Psoas muscle (tissue), 8 donors: ENCODE measurements at regions of chr5 and their contacts with region 1.

Region 1: GRCh38 chr5:157142317-157143126 is at the start of gene MED7:
- DNase-seq: peak; percentile 88 to 94
- ATAC-seq: peak; percentile 98 to 99 (median 99)
- H3K4me3 ChIP-seq: peak within 1 kb of the TSS; percentile 99
- H3K27ac ChIP-seq: peak within 1 kb of the TSS; percentile 97
- H3K4me1 ChIP-seq: peaks cover 8% of the 10 kb centered on the region
- H3K27me3 ChIP-seq: no peaks in the 10 kb centered on the region
- CTCF ChIP-seq: no peak
- total RNA-seq, gene MED7: 10.6 to 11.8 (median 11.3) TPM

Region 2: GRCh38 chr5:157290981-157291711 is 148.6 kb after region 1 on chr5:
- intact Hi-C with region 1: no loop called
- DNase-seq: no peak
- ATAC-seq: peak in 2 of 4 donors; percentile 59 to 66
- H3K4me3 ChIP-seq: no peak overlapping the region
- H3K27ac ChIP-seq: no peak overlapping the region
- H3K4me1 ChIP-seq: peaks cover 8% of the 10 kb centered on the region
- H3K27me3 ChIP-seq: no peaks in the 10 kb centered on the region
- CTCF ChIP-seq: no peak

Region 3: DNA sequence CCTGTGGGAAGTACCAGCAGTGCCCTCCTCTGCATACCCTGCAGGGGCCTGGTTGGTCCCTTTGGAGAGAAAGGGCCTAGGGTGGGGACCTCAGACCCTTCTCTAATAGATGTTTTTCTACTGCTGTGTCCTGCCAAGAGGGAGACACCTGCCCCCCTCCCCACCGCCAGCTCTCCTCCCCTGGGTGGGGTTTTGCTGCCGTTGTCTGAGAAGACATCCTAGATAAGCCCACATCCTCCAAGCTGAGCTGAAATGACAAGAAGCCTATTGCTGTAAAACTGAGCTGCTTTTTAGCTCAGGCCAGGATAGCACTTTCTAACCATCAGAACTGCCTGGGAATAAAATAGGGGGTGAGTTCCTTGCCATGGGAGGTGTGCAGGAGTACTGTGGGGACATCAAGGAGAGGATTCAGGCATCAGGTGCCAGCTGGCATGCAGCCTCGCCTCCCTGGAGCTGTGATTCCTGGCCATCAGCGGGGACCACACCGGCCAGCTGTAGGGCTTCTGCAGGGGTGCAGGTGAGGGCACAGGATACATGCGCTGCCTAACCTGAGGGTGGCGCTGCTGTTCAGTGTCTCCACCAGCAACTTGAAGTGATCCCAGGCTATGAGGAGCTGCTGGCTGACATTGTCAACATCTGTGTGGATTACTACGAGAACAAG is 161.3 kb after region 1 on chr5:
- intact Hi-C with region 1: no loop called
- DNase-seq: peak in 1 of 2 donors; percentile 62
- ATAC-seq: peak in 3 of 4 donors; percentile 53 to 72 (median 64)
- H3K4me3 ChIP-seq: no peak overlapping the region
- H3K27ac ChIP-seq: no peak overlapping the region
- H3K4me1 ChIP-seq: no peaks in the 10 kb centered on the region
- H3K27me3 ChIP-seq: no peaks in the 10 kb centered on the region
- CTCF ChIP-seq: no peak

Region 4: GRCh38 chr5:157743163-157744050 is 600.9 kb after region 1 on chr5 and contains the start of gene LSM11:
- intact Hi-C with region 1: loop called in 1 of 2 experiments (anchors 10 kb)
- DNase-seq: peak; percentile 89 to 92
- ATAC-seq: peak; percentile 98 to 99 (median 99)
- H3K4me3 ChIP-seq: peak within 1 kb of the TSS; percentile 88
- H3K27ac ChIP-seq: no peak within 1 kb of the TSS
- H3K4me1 ChIP-seq: peaks cover 17% of the 10 kb centered on the region
- H3K27me3 ChIP-seq: no peaks in the 10 kb centered on the region
- CTCF ChIP-seq: peak; percentile 99
- total RNA-seq, gene LSM11: 1.0 to 1.9 (median 1.8) TPM